ENCODE measurements at regions of chr15 and their contacts with region 1.

Region 1: DNA sequence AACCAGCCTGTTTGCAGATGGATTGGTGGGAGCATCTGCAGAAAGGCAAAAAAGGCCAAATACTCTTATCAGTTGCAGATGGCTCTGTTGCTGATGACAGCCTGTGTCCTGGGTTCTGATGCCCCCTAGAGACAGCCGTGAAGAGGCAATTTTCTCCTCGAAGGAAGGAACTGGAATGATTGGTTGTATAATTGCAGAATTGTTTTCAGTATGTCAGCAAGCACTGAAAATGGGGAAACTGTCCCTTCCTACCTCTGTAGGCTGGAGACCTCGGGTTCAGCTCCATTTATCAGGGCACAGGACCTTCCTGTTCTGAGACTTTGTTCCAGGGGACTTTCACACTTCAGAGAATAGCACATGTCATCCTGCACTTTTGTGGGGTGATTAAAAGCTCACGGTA is 103.0 kb downstream of the PGPEP1L start:
- DNase-seq: no peak
- ATAC-seq: no peak
- H3K4me3 Mint-ChIP-seq: no peak overlapping the region
- H3K27ac Mint-ChIP-seq: no peak overlapping the region
- H3K4me1 Mint-ChIP-seq: no peaks in the 10 kb centered on the region
- H3K27me3 Mint-ChIP-seq: no peaks in the 10 kb centered on the region
- CTCF ChIP-seq: no peak

Region 2: DNA sequence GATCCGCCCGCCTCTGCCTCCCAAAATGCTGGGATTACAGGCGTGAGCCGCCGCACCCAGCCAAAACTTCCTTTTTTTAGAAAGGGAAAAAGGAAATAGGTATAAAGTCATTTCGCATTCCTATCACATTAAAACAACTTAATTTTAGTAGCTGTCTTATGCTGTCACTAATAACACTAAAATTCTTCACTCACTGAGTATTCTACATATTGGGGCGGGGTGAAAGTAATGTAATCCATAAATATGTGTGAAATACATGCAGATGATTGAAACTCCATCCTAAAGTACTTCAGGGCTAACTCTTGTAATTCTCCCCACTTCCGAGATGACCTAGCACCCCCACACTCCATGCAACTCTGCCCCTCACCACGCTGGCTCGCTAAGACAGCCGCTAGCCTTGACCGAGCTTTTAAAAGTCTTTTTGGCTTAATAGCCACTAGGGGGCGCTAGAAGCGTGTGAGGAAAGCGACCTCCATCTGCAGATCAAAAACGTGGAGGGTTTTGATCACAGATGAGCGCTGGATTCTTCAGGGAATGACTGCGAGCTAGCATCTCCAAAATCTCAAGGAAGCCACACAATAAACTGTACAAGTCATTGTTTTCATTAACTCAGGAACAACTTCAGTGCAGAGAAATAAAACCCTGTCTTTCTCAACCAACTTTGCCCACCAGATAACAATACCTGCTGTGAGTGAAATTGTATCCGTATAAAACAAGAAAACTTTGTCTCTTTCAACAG is 385.6 kb before region 1 on chr15:
- CTCF ChIA-PET with region 1: interaction called, 4 read pairs
- POLR2A ChIA-PET with region 1: no interaction called
- intact Hi-C with region 1: loop called (anchors 1 kb)
- DNase-seq: no peak
- ATAC-seq: peak; percentile 49
- H3K4me3 Mint-ChIP-seq: no peak overlapping the region
- H3K27ac Mint-ChIP-seq: no peak overlapping the region
- H3K4me1 Mint-ChIP-seq: peaks cover 3% of the 10 kb centered on the region
- H3K27me3 Mint-ChIP-seq: peaks cover 4% of the 10 kb centered on the region
- CTCF ChIP-seq: peak; percentile 53

Region 3: DNA sequence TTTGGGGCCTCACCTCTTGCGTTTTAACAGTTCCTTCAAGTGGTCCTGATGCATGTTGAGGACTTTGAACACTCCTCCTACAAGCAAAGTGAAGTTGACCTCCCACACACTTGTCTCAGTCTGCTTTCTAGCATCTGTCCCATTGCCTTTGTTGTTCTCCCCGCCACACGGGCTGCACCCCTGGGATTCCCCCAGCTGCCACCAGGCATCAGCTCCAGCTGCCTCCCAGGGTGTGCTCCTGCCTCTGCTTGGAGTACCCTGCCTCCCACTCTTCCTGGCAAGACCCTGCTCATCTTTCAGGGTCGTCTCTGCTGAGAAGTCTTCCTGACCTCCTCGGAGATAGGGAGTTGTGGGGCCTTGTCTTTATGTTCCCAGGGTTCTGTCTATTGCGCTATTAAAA is 204.0 kb before region 1 on chr15:
- CTCF ChIA-PET with region 1: no interaction called
- POLR2A ChIA-PET with region 1: no interaction called
- intact Hi-C with region 1: no loop called
- DNase-seq: no peak
- ATAC-seq: no peak
- H3K4me3 Mint-ChIP-seq: no peak overlapping the region
- H3K27ac Mint-ChIP-seq: no peak overlapping the region
- H3K4me1 Mint-ChIP-seq: peaks cover 10% of the 10 kb centered on the region
- H3K27me3 Mint-ChIP-seq: peaks cover 6% of the 10 kb centered on the region
- CTCF ChIP-seq: no peak

Region 4: DNA sequence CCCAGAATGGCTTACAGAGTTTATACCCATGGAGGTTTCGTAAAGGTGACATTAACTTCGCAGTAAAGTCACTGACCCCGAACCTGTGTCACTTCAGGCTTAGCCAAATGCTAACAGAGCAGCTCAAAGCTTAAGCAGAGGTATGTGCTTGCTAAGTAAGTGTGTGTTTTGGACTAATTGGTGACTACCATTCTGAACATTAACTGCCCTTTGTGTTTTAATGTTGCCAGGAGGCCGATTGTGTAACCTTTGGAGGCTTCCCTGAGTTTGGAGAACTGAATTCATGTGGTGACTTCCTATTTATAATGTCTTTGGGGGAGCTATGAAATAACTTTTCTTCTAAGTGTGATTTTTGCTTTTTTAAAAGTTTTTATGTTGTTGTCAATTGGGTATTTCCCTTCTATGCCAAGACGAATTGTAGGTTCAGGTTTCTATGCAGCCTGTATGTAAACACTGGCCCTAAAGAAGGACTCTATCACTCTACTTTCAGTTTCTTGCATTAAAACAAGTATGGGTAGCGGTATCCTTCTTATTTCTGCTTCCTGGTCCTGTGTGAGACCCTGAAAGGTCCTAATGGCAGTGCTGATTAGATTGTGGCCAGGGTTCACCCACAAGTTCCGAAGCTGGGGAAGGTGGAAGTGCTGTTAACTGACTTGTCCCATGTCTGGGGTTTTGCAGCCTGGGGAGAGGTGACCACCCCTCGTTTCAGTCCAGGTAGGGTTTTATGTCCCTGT is 169.9 kb before region 1 on chr15:
- CTCF ChIA-PET with region 1: no interaction called
- POLR2A ChIA-PET with region 1: no interaction called
- intact Hi-C with region 1: no loop called
- DNase-seq: no peak
- ATAC-seq: no peak
- H3K4me3 Mint-ChIP-seq: no peak overlapping the region
- H3K27ac Mint-ChIP-seq: no peak overlapping the region
- H3K4me1 Mint-ChIP-seq: peaks cover 1% of the 10 kb centered on the region
- H3K27me3 Mint-ChIP-seq: peaks cover 2% of the 10 kb centered on the region
- CTCF ChIP-seq: no peak

Region 5: GRCh38 chr15:98779463-98780071 is 125.0 kb before region 1 on chr15:
- CTCF ChIA-PET with region 1: interaction called, 5 read pairs
- POLR2A ChIA-PET with region 1: no interaction called
- intact Hi-C with region 1: loop called (anchors 1 kb)
- DNase-seq: peak; percentile 60
- ATAC-seq: peak; percentile 81
- H3K4me3 Mint-ChIP-seq: no peak overlapping the region
- H3K27ac Mint-ChIP-seq: no peak overlapping the region
- H3K4me1 Mint-ChIP-seq: peaks cover 25% of the 10 kb centered on the region
- H3K27me3 Mint-ChIP-seq: peaks cover 17% of the 10 kb centered on the region
- CTCF ChIP-seq: no peak

Region 6: DNA sequence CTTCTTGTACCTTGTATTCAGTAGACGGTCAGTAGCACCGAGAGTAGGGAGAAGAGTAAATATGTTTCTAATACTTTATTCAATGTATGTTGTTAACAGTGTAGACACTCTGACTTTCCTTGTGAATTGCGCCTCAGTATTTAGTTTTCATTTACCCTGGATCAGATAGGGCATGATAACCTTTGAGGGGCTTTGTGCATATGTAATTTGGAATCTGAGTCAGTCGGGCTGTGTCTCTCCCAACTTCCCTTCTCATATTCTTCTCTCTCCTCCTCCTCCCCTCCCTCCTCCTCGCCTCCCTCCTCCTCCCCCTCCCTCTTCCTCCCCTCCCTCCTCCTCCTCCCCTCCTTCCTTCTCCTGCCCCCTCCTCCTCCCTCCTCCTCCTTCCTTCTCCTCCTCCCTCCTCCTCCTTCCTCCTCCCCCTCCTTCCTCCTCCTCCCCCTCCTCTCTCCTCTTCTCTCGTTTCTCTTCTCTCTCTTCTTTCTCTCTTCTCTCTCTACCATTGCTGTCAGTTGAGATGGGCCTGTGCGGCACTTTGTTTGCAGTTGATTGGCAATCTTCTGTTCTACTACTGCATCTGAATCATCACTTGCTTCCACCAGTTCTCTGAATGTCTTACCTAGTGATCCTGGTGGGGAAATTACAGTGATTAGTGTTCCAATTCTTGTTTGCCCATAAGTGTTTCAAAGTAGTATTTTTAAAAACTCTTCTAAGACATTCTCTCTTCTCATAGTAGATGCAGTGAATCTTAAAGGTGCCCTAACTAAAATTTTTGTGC is 59.2 kb before region 1 on chr15:
- CTCF ChIA-PET with region 1: no interaction called
- POLR2A ChIA-PET with region 1: no interaction called
- intact Hi-C with region 1: loop called (anchors 10 kb)
- DNase-seq: no peak
- ATAC-seq: no peak
- H3K4me3 Mint-ChIP-seq: no peak overlapping the region
- H3K27ac Mint-ChIP-seq: no peak overlapping the region
- H3K4me1 Mint-ChIP-seq: no peaks in the 10 kb centered on the region
- H3K27me3 Mint-ChIP-seq: peaks cover 7% of the 10 kb centered on the region
- CTCF ChIP-seq: no peak

Measured in activated B cell treated with CpG ODN at 0.5 μM for 24 hours (primary cell).